Activated CD4-positive, alpha-beta T cell treated with anti-CD3 and anti-CD28 coated beads for 36 hours (primary cell): ENCODE measurements at regions of chr7 and their contacts with region 1.

Region 1: DNA sequence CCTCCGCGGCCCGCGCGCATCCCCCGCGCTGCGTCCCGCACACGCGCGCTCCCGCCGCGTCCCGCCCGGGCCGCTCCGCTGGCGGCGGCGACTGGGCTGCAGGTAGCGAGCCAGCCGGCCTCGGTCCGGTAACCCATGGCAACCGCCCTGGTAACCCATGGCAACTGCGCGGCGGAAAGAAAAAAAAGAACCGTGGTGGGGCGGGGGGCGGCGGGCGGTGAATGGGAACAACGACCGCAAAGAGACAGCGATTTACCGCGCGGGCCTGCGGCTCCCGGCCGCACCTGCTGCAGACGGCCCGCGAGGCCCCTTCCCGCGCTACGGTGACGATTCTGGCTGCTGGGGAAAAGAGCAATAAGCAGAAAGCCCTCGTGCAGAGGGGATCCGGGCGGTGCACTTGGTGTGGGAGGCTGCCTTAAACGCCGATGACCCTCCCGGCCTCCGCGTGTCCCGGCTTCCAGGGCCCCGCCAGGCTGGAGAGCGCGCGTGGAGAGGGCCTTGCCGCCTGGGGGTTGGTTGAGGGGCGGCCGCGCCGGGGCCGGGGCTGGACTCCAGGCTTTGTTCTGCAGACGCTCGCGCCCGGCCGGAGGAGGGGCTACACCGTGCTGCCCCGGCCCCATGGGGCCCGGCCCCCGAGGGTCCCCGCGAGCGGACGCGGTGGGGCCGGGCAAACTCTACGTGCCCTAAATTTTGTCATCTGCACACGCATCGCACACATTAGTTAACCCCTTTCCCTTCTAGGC is 84.7 kb downstream of the SNX10 start:
- DNase-seq: peak; percentile 65
- ATAC-seq: peak; percentile 27
- H3K4me3 Mint-ChIP-seq: peak overlapping the region; percentile 70
- H3K27ac Mint-ChIP-seq: no peak overlapping the region
- H3K4me1 Mint-ChIP-seq: peaks cover 5% of the 10 kb centered on the region
- H3K27me3 Mint-ChIP-seq: peaks cover 22% of the 10 kb centered on the region

Region 2: GRCh38 chr7:25926009-25926408 is 450.3 kb before region 1 on chr7:
- CTCF ChIA-PET with region 1: no interaction called
- POLR2A ChIA-PET with region 1: no interaction called
- intact Hi-C with region 1: no loop called
- DNase-seq: no peak
- ATAC-seq: no peak
- H3K4me3 Mint-ChIP-seq: no peak overlapping the region
- H3K27ac Mint-ChIP-seq: no peak overlapping the region
- H3K4me1 Mint-ChIP-seq: no peaks in the 10 kb centered on the region
- H3K27me3 Mint-ChIP-seq: peaks cover 26% of the 10 kb centered on the region

Region 3: GRCh38 chr7:26052721-26053120 is 323.6 kb before region 1 on chr7:
- CTCF ChIA-PET with region 1: no interaction called
- POLR2A ChIA-PET with region 1: no interaction called
- intact Hi-C with region 1: no loop called
- DNase-seq: no peak
- ATAC-seq: no peak
- H3K4me3 Mint-ChIP-seq: no peak overlapping the region
- H3K27ac Mint-ChIP-seq: no peak overlapping the region
- H3K4me1 Mint-ChIP-seq: no peaks in the 10 kb centered on the region
- H3K27me3 Mint-ChIP-seq: peaks cover 24% of the 10 kb centered on the region

Region 4: GRCh38 chr7:26388256-26388655 is 11.9 kb after region 1 on chr7:
- CTCF ChIA-PET with region 1: interaction called, 11 read pairs
- POLR2A ChIA-PET with region 1: no interaction called
- intact Hi-C with region 1: no loop called
- DNase-seq: peak; percentile 11
- ATAC-seq: peak; percentile 53
- H3K4me3 Mint-ChIP-seq: no peak overlapping the region
- H3K27ac Mint-ChIP-seq: no peak overlapping the region
- H3K4me1 Mint-ChIP-seq: peaks cover 2% of the 10 kb centered on the region
- H3K27me3 Mint-ChIP-seq: peaks cover 23% of the 10 kb centered on the region

Region 5: GRCh38 chr7:26500749-26501352 is 124.5 kb after region 1 on chr7:
- CTCF ChIA-PET with region 1: interaction called, 4 read pairs
- POLR2A ChIA-PET with region 1: no interaction called
- intact Hi-C with region 1: loop called (anchors 1 to 2 kb)
- DNase-seq: no peak
- ATAC-seq: no peak
- H3K4me3 Mint-ChIP-seq: no peak overlapping the region
- H3K27ac Mint-ChIP-seq: no peak overlapping the region
- H3K4me1 Mint-ChIP-seq: no peaks in the 10 kb centered on the region
- H3K27me3 Mint-ChIP-seq: peaks cover 3% of the 10 kb centered on the region

Region 6: GRCh38 chr7:26574476-26574875 is 198.1 kb after region 1 on chr7:
- CTCF ChIA-PET with region 1: no interaction called
- POLR2A ChIA-PET with region 1: no interaction called
- intact Hi-C with region 1: no loop called
- DNase-seq: no peak
- ATAC-seq: no peak
- H3K4me3 Mint-ChIP-seq: no peak overlapping the region
- H3K27ac Mint-ChIP-seq: no peak overlapping the region
- H3K4me1 Mint-ChIP-seq: no peaks in the 10 kb centered on the region
- H3K27me3 Mint-ChIP-seq: peaks cover 4% of the 10 kb centered on the region

Region 7: DNA sequence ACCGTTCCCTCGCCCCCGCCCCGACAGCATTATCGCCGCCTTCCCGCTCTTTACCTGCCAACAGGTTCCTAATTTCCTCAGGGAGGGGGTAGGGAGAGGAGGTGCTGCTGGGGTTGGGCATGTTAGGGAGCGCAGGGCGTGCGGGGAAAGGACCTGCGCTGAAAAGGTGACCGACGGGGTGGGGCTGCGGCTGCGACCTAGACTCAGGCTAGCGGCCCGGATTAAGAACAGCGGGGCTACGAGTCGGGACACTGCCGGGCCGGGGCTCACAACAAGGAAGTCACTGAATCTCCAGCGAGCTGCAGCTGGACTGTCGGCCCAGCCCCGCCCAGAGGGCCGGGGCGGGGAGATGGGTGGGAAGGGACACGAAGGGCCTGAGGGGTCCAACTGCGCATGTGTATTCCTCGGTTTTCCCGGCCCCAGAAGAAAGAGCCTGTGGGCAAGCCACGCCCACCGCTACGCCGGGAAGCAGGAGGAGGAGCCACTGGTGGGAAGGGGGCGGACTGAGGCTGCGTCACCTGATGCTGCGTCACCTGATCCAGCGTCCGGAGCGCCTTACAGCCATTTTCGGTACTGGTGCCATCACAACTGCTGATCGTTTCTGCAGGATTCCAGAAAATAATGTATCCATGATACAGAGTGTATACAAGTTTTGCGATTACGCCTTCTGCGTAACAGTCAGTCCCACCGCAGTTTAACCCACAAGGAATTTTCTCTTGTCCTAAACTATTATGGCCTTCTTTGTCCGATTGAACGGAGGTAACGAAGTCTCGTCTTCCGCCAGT is 488.2 kb after region 1 on chr7 and contains the start of gene SKAP2:
- CTCF ChIA-PET with region 1: no interaction called
- POLR2A ChIA-PET with region 1: no interaction called
- intact Hi-C with region 1: loop called in 1 of 2 experiments (anchors 5 kb)
- DNase-seq: peak; percentile 94
- ATAC-seq: peak; percentile 95
- H3K4me3 Mint-ChIP-seq: peak within 1 kb of the TSS; percentile 86
- H3K27ac Mint-ChIP-seq: peak within 1 kb of the TSS; percentile 83
- H3K4me1 Mint-ChIP-seq: peaks cover 17% of the 10 kb centered on the region
- H3K27me3 Mint-ChIP-seq: peaks cover 34% of the 10 kb centered on the region
- total RNA-seq, gene SKAP2: 7.8 to 10.4 TPM

Region 8: GRCh38 chr7:27160546-27161213 is 784.3 kb after region 1 on chr7:
- CTCF ChIA-PET with region 1: no interaction called
- POLR2A ChIA-PET with region 1: no interaction called
- intact Hi-C with region 1: loop called in 1 of 2 experiments (anchors 2 kb)
- DNase-seq: peak; percentile 91
- ATAC-seq: peak; percentile 50
- H3K4me3 Mint-ChIP-seq: peak overlapping the region; percentile 62
- H3K27ac Mint-ChIP-seq: no peak overlapping the region
- H3K4me1 Mint-ChIP-seq: peaks cover 24% of the 10 kb centered on the region
- H3K27me3 Mint-ChIP-seq: peaks cover 74% of the 10 kb centered on the region

Region 9: DNA sequence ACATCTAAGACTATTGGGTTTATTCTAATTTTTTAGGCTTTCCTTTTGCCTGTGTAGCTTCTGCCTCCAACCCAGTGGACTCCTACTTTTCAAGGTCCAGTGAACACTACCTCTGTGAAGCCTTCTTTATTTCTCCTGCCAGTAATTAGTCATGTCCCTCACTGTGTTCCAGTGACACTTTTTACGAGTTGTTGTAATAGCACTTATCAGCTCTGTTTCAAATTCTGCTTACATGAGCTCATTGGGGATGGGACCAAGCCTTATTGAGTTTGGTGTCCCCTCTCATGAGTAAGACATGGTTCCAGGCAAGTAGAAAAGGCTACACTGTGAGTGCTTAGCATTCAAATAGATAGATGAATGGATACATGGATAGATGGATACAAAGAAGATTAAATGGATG is 1101.7 kb after region 1 on chr7:
- CTCF ChIA-PET with region 1: no interaction called
- POLR2A ChIA-PET with region 1: no interaction called
- intact Hi-C with region 1: no loop called
- DNase-seq: no peak
- ATAC-seq: no peak
- H3K4me3 Mint-ChIP-seq: no peak overlapping the region
- H3K27ac Mint-ChIP-seq: no peak overlapping the region
- H3K4me1 Mint-ChIP-seq: no peaks in the 10 kb centered on the region
- H3K27me3 Mint-ChIP-seq: peaks cover 4% of the 10 kb centered on the region